ENCODE measurements at regions of chr20 and their contacts with region 1.

Region 1: GRCh38 chr20:38645980-38646858 is 44.6 kb downstream of the ARHGAP40 start:
- DNase-seq: peak; percentile 72 to 88 (median 79)
- ATAC-seq: peak; percentile 97
- H3K4me3 ChIP-seq: no peak overlapping the region
- H3K4me1 ChIP-seq: peaks cover 3% of the 10 kb centered on the region
- CTCF ChIP-seq: peak; percentile 84

Region 2: DNA sequence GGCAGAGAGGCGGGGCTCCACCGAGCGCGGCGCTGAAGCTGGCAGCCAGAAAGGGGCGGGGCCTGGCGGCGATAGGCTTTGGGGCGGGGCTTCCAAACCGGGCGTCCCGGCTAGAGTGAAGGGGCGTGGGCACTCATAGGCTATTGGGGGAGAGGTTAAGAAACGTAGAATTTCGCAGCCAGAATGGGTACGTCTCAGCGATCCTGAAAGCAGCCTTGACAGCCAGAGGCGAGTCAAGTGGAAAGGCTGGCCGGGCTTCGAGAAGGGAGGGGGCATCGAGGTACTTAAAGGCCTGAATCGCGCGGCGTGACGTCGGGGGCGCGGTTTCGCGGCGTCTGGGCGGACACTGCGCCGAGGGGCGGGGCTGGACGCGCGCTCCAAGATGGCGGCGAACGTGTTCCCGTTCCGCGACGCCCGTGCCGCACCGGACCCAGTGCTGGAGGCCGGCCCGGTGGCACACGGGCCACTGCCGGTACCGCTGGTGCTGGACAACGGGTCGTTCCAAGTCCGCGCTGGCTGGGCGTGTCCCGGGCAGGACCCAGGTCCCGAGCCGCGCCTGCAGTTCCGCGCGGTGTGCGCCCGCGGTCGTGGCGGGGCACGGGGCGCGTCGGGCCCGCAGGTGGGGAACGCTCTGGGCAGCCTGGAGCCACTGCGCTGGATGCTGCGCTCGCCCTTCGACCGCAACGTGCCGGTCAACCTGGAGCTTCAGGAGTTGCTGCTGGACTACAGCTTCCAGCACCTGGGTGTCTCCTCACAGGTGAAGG is 102.1 kb after region 1 on chr20 and contains the start of gene ACTR5:
- intact Hi-C with region 1: loop called (anchors 10 kb)
- DNase-seq: peak; percentile 96 to 98 (median 96)
- ATAC-seq: peak; percentile 96
- H3K4me3 ChIP-seq: peak within 1 kb of the TSS; percentile 78
- H3K4me1 ChIP-seq: peaks cover 6% of the 10 kb centered on the region
- CTCF ChIP-seq: no peak
- total RNA-seq, gene ACTR5: 6.0 to 8.1 (median 7.9) TPM

Region 3: DNA sequence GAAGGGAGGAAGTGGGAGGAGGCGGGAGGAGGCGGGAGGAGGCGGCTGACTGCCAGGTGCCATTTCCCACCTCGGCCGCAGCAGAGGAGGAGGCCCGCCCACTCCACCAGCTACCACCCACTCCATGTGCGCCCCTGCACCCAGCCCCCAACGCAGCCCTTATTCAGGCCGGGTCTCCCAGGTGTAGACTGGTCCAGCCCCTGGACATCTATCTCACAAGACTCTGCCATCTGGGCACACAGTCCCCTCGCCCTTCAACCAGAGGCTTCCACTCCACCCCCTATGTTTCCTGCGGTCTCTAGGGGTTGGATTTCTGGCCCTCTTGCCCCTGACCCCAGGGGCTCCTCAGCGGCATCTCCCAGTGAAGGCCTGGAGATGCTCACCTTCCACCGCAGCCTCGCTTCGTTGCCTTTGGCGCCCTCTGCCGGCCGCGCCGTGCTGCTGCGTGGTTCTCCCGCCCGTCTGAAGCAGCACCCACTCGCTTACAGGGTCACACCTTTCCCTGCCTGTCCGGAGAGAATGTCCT is 247.4 kb after region 1 on chr20:
- intact Hi-C with region 1: loop called in 1 of 2 experiments (anchors 10 kb)
- DNase-seq: peak; percentile 79 to 84 (median 83)
- ATAC-seq: peak; percentile 92
- H3K4me3 ChIP-seq: no peak overlapping the region
- H3K4me1 ChIP-seq: peaks cover 3% of the 10 kb centered on the region
- CTCF ChIP-seq: peak; percentile 87

Region 4: DNA sequence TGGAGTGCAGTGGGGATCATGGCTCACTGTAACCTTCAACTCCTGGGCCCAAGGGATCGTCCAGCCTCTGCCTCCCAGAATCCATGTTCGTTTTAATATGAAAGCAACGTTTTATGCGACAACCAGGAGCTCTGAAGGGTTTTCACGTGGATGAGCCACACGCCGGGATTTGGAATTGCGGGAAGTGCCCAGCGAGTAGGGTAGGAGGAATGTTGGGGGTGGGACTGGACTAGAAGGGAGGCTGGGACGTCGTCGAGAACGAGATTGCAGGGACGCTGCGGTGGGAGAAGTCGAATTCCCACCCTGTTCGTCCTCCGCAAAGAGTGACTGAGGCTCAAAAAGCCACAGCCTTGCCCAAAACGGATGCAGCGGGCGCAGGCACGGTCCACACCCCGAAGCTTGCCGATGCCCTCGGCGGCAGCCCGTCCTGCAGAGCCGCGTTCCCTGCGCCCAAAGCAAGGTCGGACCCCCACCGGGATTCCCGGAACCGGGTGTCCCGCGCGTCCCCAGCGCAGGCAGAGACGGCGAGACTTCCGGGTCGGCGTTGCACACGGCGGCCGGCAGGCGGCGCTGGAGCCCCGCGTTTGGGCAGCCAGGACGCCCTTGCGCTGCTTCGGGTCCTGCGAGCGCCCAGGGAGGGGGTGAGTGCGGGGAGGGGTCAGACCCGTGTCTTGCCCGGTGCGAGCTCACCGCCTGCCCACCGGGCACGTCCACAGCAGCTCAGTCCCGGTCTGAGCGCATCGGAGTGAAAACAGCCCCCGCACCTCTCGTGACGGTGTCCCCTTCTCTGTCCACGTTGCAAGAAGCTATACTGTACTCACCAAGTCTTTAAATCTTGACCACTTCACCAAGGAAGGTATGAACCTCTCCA is 403.7 kb after region 1 on chr20:
- intact Hi-C with region 1: loop called in 1 of 2 experiments (anchors 10 kb)
- DNase-seq: peak; percentile 84 to 88 (median 85)
- ATAC-seq: peak; percentile 93
- H3K4me3 ChIP-seq: no peak overlapping the region
- H3K4me1 ChIP-seq: no peaks in the 10 kb centered on the region
- CTCF ChIP-seq: peak; percentile 97